Activated T-helper 2 cell treated with anti-CD3 and anti-CD28 coated beads, Interferon-gamma antibody, Interleukin-2, Interleukin-4, amounts not matched to agents 10 μg/mL and 5 μg/mL and 100 μg/mL, durations not matched to agents 14 hours and 24 hours and 36 hours (primary cell): ENCODE measurements at regions of chr6 and their contacts with region 1.

Region 1: DNA sequence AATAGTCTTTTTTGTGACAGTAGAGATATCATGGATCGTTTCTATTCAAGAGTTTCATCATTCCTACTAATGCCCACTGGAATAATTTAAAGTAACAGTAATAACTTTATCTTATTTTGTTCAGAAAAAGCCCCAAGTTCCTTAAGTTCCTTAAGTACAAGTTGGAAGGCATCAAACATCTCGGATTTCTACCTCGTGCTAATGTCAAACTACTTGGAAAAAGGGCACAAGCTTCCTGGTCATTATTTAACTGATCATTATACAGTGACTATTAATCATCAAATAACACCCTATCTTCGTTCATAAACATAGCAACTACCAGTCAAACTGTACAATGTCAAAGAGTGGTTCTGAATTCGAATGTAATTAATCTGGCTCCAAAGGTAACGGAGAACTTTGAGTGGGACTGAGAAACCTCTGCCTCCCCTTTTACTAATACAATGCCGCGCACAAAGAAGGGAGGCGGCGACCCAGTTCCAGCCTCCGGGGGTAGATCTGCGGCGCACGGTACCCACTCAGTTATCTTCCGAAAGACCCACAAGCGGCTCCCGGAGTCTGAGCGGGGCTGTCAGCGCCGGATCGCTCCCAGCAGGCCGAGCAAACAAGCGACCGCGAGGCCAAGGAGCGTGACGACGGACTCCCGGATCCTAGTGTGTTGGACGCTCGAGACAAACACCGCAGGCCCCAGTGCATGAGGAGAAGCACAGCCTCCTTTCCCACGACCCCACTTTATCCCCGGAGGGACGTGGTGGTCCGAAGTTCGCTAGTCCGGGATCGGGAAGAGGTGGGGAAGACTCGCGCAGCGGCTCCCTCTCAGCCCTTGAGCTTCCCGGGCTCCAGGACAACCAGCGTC is 716 bp downstream of the SHPRH start:
- DNase-seq: peak; percentile 24
- H3K4me3 Mint-ChIP-seq: peak overlapping the region; percentile 96
- H3K27ac Mint-ChIP-seq: peak overlapping the region; percentile 93
- H3K4me1 Mint-ChIP-seq: peaks cover 32% of the 10 kb centered on the region
- H3K27me3 Mint-ChIP-seq: peaks cover 3% of the 10 kb centered on the region

Region 2: GRCh38 chr6:145734486-145735355 is 228.7 kb before region 1 on chr6:
- intact Hi-C with region 1: loop called (anchors 2 kb)
- DNase-seq: peak; percentile 67
- H3K4me3 Mint-ChIP-seq: peak overlapping the region; percentile 93
- H3K27ac Mint-ChIP-seq: peak overlapping the region; percentile 98
- H3K4me1 Mint-ChIP-seq: peaks cover 26% of the 10 kb centered on the region
- H3K27me3 Mint-ChIP-seq: no peaks in the 10 kb centered on the region

Region 3: GRCh38 chr6:145814501-145815308 is 148.7 kb before region 1 on chr6 and contains the start of gene FBXO30:
- intact Hi-C with region 1: loop called (anchors 1 kb)
- DNase-seq: peak; percentile 82
- H3K4me3 Mint-ChIP-seq: peak within 1 kb of the TSS; percentile 87
- H3K27ac Mint-ChIP-seq: peak within 1 kb of the TSS; percentile 89
- H3K4me1 Mint-ChIP-seq: peaks cover 39% of the 10 kb centered on the region
- H3K27me3 Mint-ChIP-seq: no peaks in the 10 kb centered on the region
- total RNA-seq, gene FBXO30: 6.4 and 6.8 TPM in 2 replicates

Region 4: DNA sequence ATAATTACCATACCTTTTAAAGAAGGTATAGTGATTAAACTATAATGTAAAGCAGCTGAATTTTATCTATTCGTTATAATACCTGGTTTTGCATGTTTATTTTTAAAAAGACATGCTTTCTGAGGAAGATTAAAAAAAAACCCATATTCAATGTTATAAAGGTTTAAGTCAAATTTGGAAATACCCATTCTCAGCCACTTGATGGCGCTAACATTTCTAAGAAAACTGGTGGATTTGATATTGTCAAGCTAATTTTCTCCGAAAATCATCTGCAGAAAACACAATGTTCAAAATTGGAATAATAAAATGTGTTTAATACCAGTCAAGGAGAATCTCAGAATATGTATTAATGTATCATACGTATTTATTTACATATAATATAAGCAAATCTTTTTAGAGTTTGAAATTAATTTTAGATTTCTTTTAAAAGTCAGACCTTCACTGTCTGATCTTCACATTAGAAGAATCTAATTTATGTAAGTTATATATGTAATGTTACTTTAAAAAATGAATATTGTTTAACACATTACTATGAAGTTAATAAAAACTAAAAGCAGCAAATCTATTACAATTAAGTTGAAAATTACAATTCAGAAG is 34.3 kb before region 1 on chr6:
- intact Hi-C with region 1: loop called (anchors 5 kb)
- DNase-seq: no peak
- H3K4me3 Mint-ChIP-seq: no peak overlapping the region
- H3K27ac Mint-ChIP-seq: no peak overlapping the region
- H3K4me1 Mint-ChIP-seq: peaks cover 2% of the 10 kb centered on the region
- H3K27me3 Mint-ChIP-seq: no peaks in the 10 kb centered on the region

Region 5: DNA sequence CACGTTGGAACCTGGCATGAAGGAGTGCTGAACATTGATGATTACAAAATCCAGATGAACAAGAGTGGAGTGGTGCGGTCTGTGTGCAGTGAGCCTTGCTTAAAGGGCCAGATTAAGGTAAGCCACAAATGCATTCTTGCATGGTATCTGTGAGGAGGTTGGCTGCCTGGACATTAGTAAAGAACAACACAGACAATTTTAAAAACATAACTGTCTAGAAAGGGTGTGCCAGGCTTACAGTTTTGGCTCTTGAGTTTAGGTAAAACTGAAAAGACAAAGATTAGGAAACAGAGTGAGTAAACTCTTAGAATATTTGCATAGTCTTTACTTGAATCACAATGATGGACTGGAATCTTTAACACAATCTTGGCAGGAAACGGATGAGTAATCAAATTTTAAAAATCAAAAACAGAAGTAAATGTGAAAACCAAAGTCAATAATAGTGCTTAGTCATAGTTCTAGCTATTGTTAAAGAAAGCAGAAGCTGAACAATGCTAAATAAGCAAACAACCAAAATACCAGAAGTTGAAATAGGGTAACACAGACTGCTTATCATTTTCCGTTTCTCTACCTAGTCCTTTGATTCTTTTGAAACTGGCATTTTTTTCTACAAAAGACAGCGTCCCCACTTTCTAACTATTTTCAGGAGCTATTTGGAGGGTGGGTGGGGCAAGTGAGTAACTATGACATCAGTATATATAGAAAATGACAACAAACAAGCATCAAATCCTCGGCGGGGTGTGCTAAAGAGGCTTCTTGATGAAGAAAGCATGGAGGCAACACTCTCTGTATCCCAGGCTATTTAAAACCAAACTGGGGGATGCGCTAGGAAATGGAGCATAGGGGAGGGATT is 394.4 kb after region 1 on chr6:
- intact Hi-C with region 1: loop called (anchors 10 kb)
- DNase-seq: no peak
- H3K4me3 Mint-ChIP-seq: no peak overlapping the region
- H3K27ac Mint-ChIP-seq: peak overlapping the region; percentile 56
- H3K4me1 Mint-ChIP-seq: peaks cover 18% of the 10 kb centered on the region
- H3K27me3 Mint-ChIP-seq: no peaks in the 10 kb centered on the region

Region 6: DNA sequence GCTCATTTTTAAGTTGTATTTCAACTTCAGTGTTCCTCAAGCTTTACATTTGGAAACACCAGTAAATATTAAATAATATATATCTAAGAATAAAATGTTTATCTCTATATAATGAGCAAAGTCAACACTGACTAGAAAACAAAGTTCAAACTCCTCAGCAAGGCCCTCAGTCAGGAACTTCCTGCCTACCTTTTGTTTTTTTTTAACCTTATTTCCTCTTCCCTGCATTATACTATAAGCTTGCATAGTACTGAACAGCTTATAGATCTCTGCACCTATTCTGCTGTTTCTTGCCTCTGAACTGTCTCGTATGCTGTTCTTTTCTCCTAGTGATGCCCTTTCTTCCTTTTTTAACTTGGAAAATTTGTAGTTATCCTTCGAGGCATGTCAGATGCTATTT is 664.9 kb after region 1 on chr6:
- intact Hi-C with region 1: no loop called
- DNase-seq: no peak
- H3K4me3 Mint-ChIP-seq: no peak overlapping the region
- H3K27ac Mint-ChIP-seq: no peak overlapping the region
- H3K4me1 Mint-ChIP-seq: no peaks in the 10 kb centered on the region
- H3K27me3 Mint-ChIP-seq: no peaks in the 10 kb centered on the region

Region 7: DNA sequence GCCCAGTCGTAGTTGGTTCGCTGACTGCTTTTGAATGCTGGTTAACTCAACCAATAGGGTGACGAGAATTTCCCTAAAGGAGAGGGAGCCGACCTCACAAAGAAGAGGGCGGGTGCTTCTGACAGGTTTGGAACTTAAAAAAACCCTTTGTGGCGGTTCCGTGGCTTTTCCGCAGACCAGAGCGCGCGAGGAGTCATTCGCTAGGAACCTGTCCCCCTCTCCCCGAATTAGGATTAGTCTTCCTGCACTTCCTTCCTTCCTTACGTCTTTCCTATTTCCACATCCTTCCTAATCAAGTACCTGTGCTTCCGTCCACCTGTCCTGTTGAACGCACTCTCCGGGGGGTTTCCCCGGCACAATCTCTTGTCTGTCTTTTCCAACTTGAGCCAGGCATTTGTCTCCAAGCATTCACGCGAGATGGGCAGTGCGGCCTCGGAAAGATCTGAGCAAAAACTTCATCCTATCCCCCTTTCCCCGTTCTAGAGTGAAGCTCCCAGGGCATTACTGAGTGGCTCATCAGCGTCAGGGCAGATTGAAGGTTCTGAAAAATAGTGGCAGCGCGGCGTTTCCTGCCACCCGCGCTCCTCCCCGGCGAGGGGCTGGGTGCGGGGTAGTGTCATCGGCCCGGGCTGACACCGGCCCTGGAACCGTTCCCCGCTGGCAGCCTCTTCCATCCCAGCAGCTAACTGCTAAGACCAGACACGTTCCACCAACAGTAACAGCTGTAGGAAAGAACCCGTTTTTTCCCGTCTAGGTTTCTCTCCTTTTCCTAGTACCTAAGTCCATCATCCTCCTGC is 1239.3 kb after region 1 on chr6:
- intact Hi-C with region 1: loop called (anchors 10 kb)
- DNase-seq: peak; percentile 79
- H3K4me3 Mint-ChIP-seq: peak overlapping the region; percentile 93
- H3K27ac Mint-ChIP-seq: peak overlapping the region; percentile 99
- H3K4me1 Mint-ChIP-seq: peaks cover 29% of the 10 kb centered on the region
- H3K27me3 Mint-ChIP-seq: no peaks in the 10 kb centered on the region